ENCODE measurements at regions of chr6 and their contacts with region 1.

Region 1: GRCh38 chr6:31665501-31666336 is at the start of gene CSNK2B:
- DNase-seq: no peak
- H3K4me3 ChIP-seq: peak within 1 kb of the TSS; percentile 98
- CTCF ChIP-seq: no peak

Region 2: DNA sequence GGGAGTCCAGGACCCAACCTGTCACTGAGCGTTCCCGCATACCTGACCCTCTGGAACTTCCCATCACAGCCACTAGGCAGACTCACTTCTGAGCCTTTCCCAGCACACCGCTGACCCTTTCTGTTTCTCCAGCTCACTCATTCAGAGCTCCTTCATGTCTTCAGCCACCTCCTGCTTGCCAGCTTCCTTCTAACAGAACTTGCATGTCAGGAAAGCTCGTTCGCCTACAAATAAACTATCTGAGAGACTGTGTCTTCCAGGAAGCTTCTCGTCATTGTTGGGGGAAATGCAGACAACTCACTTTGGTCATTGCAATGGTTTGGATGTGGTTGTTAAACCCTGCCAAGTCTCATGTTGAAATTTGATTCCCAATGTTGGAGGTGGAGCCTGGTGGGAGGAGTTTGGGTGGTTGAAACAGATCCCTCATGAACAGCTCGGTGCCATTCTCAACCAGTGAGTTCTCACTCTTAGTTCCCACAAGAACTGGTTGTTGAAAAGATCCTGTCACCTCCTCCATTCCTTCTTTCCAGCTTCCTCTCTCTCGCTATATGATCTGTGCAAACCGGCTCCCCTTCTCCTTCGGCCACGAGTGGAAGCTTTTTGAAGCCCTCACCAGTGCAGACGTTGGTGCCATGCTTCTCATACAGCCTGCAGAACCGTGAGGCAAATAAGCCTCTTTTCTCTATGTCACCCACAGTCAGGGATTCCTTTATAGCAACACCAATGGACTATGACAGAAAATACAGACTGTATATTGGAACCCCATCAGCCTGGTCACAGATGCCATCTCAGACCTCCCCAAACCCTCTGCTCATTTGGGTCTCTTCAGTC is 683.6 kb before region 1 on chr6:
- CTCF ChIA-PET with region 1: no interaction called
- POLR2A ChIA-PET with region 1: no interaction called
- DNase-seq: peak; percentile 23
- H3K4me3 ChIP-seq: peak overlapping the region; percentile 49
- CTCF ChIP-seq: peak; percentile 44

Region 3: DNA sequence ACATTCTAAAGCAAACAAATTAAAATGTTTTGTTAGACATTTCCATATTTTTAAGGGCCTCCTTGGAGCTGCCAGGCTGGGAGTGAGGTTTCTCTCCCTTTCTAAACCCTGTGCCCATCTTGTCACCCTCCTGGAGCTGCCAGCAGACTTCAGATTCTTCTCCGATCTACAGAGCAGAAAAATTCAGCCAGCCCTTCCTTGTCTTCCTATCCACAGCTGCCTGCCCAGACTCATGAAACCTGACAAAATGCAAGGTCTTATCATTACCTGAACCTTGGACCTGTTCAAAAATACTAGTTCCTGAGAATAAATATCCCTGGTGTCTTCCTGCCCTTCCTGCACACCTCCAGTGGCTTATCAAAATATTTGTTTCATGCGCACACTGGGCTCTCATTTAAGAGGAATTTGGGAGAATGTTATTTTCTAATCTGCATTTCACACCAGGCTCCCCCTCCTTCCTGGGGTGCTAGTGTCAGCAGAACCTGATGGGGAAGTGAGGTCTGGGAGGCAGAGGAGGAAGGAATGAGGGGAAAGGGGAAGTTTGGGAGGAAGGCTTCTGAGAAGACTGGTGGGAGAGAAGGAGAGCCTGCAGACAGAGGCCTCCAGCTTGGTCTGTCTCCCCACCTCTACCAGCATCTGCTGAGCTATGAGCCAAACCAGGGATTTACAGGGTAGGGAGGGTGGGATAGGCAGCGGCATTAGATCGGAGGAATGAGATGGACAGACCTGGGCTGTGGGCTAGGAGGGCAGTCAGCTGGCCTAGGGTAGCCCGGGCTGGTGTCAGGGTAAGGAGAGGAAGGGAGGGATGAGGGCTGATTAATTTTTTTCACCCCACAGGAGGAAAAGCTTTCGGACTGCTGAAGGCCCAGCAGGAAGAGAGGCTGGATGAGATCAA is 50.8 kb before region 1 on chr6 and contains the start of gene AIF1:
- CTCF ChIA-PET with region 1: no interaction called
- POLR2A ChIA-PET with region 1: no interaction called
- DNase-seq: no peak
- H3K4me3 ChIP-seq: no peak within 1 kb of the TSS
- CTCF ChIP-seq: no peak

Region 4: DNA sequence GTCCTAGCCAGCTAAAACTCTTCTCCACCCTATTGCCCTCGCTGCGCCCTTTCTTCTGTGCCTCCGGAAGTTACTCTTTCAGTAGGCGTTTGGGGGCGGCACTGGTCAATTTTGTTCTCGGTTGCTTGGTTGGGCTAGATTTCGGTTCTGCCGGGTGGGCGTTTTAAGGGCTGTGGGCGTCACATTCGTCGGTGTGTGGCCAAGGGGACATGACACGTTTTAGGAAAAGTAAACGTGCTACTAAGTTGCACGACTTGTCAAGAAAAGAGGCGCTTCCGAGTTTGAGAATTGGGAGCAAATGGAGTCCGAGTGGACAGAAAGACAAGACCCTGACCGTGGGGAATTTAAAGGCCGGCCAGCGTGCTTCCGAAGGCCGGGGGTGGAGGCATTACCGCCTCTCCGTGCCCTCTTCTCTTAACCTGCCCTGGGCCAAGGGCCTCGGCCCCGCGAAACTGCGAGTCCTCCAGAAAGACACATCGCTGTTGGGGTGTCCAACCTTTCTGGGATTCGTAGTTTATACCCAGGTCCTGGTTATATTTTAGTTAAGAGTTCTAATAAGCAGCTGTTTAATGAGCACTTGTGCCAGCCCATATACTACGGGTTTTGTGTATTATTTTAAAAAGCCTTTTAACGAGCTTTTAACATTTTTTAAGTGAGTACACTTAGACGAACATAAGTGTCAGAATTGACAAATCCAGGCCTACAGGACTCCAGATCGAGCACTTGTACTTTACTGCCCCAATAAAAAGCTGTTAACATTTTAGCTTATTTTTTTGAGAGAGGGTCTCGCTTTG is 12.6 kb before region 1 on chr6:
- CTCF ChIA-PET with region 1: interaction called, 19 read pairs
- POLR2A ChIA-PET with region 1: interaction called, 31 read pairs
- DNase-seq: no peak
- H3K4me3 ChIP-seq: peak overlapping the region; percentile 91
- CTCF ChIP-seq: no peak

Measured in AG04449 (cell line).